Spleen (tissue), 13 donors: ENCODE measurements at regions of chr3 and their contacts with region 1.

Region 1: GRCh38 chr3:98812851-98813374 is 49.8 kb downstream of the ST3GAL6 start:
- DNase-seq: no peak
- H3K4me3 ChIP-seq: no peak overlapping the region
- H3K27ac ChIP-seq: no peak overlapping the region
- H3K4me1 ChIP-seq: no peaks in the 10 kb centered on the region
- H3K27me3 ChIP-seq: no peaks in the 10 kb centered on the region
- CTCF ChIP-seq: peak in 10 of 11 experiments; percentile 10 to 73 (median 58)
- POLR2A ChIP-seq: no peak

Region 2: DNA sequence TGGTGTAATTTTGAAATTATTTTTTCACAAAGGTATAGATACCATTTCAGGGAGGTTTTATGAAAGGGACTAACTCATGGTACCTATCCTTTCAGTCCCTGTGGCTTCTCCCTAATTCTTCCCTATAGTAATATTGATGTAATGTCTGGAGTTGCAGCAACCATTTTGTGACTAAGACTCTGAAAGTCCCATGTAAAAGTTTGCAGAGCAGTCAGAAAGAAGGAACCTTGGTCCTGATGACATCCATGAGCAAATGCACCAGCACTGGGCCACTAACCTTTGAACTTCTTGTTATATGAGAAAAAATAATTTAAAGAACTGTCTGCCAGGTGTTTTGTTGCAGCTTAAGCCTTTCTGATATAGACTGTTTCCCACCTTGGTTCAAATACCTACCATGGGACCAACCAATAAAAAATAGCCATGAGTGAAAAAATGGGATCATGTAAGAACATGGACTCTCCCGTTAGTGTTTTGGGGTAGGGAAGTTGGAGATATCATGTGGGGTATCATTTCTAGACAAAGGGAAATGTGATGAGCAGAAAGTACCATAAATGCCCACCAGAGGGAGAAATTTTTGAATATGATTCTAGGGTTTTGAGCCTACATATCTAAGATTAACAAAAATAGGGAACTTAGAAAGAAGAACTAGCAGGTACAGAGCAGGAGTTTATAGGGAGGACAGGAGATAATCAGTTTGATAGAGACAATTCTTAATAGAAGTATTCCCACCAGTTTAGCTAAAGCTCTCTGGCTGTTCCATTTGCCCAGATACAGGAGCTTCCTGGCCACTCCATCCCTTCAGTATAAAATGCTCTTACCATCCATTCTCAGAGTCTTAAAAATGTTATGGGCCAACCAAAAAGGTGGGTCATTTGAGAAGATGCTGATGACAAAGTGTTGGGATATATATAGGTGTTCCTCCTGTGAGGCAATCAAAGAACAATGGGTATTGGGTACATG is 216.1 kb before region 1 on chr3:
- intact Hi-C with region 1: loop called (anchors 2 kb)
- DNase-seq: no peak
- H3K4me3 ChIP-seq: no peak overlapping the region
- H3K27ac ChIP-seq: no peak overlapping the region
- H3K4me1 ChIP-seq: peaks cover 9 to 30% (median 17%) of the 10 kb centered on the region in 6 donors
- H3K27me3 ChIP-seq: no peaks in the 10 kb centered on the region
- CTCF ChIP-seq: peak; percentile 52 to 81 (median 75)
- POLR2A ChIP-seq: no peak